ENCODE measurements at regions of chr16 and their contacts with region 1.

Region 1: DNA sequence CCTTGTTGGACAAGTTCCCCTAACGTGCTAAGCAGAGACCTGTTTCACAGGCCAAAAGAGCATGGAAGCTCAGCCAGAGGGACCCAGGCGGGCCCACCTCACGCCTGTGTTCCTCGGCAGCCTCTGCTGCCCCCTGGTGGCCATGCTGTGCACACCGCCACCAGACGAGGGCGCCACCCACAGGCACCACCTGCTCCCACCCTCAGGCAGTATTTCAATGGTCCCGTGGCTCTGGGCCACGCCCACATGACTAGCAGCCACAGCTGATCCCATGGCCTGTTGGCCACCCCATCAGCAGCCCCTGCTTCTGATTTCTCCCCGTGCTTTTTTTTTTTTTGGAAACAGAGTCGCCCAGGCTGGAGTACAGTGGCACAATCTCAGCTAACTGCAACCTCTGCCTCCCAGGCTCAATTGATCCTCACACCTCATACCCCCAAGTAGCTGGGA is 18.9 kb downstream of the MPG start:
- DNase-seq: peak; percentile 82 to 94 (median 90)
- ATAC-seq: peak; percentile 100
- H3K4me3 ChIP-seq: no peak overlapping the region
- H3K4me3 Mint-ChIP-seq: no peak overlapping the region
- H3K27ac ChIP-seq: no peak overlapping the region
- H3K27ac Mint-ChIP-seq: no peak overlapping the region
- H3K4me1 ChIP-seq: no peaks in the 10 kb centered on the region
- H3K4me1 Mint-ChIP-seq: peaks cover 5% of the 10 kb centered on the region
- H3K27me3 ChIP-seq: no peaks in the 10 kb centered on the region
- H3K27me3 Mint-ChIP-seq: no peaks in the 10 kb centered on the region
- CTCF ChIP-seq: peak; percentile 97

Region 2: GRCh38 chr16:77807-78443 is 19.0 kb before region 1 on chr16 and contains the start of gene MPG:
- CTCF ChIA-PET with region 1: interaction called, 309 read pairs
- POLR2A ChIA-PET with region 1: interaction called, 3 read pairs
- intact Hi-C with region 1: no loop called
- DNase-seq: peak; percentile 55 to 90 (median 80)
- ATAC-seq: peak; percentile 91
- H3K4me3 ChIP-seq: peak within 1 kb of the TSS; percentile 68 to 69
- H3K4me3 Mint-ChIP-seq: peak within 1 kb of the TSS; percentile 87
- H3K27ac ChIP-seq: peak within 1 kb of the TSS; percentile 31 to 55
- H3K27ac Mint-ChIP-seq: peak within 1 kb of the TSS; percentile 73
- H3K4me1 ChIP-seq: peaks cover 26% of the 10 kb centered on the region
- H3K4me1 Mint-ChIP-seq: peaks cover 31% of the 10 kb centered on the region
- H3K27me3 ChIP-seq: peaks cover 5 to 7% of the 10 kb centered on the region in 2 experiments
- H3K27me3 Mint-ChIP-seq: peaks cover 11% of the 10 kb centered on the region
- CTCF ChIP-seq: no peak
- total RNA-seq, gene MPG: 12.3 to 13.0 TPM

Region 3: DNA sequence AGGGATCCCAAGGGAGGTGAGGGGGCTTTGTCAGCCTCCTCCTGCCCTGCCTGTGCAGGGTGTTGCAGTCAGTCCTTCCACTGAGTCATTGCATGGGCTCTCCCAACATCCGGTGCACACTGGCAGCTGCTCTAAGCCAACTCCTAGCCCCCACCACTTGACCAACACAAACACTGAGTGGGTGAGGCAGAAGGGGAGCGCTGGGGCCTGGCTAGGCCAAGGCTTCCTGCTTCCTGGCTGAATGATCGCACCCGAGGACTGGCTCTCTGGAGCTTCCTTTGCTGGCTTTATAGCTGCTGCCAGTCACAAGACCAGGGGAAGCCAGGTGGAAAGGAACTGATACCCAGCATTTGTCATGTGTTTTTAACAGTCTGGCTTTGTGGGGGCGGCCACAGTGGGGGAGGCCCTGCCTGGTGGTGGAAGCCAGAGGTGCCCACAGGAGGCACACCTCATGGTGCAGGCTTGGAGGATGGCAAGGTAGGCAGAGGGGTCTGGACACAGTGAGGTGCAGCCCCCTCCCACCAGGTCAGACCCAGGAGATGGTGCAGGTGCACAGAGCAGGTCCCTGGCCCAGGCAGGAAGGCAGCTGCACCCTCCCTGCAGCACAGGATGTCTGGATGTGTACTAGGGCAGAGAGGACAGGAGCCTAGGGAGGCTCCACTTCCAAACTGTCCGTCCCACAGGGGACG is 12.1 kb before region 1 on chr16:
- CTCF ChIA-PET with region 1: interaction called, 30 read pairs
- POLR2A ChIA-PET with region 1: interaction called, 3 read pairs
- intact Hi-C with region 1: no loop called
- DNase-seq: peak in 8 of 9 experiments; percentile 22 to 64 (median 44)
- ATAC-seq: peak; percentile 80
- H3K4me3 ChIP-seq: no peak overlapping the region
- H3K4me3 Mint-ChIP-seq: no peak overlapping the region
- H3K27ac ChIP-seq: peak overlapping the region; percentile 22 to 66
- H3K27ac Mint-ChIP-seq: peak overlapping the region; percentile 85
- H3K4me1 ChIP-seq: peaks cover 24% of the 10 kb centered on the region
- H3K4me1 Mint-ChIP-seq: peaks cover 25% of the 10 kb centered on the region
- H3K27me3 ChIP-seq: no peaks in the 10 kb centered on the region
- H3K27me3 Mint-ChIP-seq: no peaks in the 10 kb centered on the region
- CTCF ChIP-seq: no peak

Region 4: GRCh38 chr16:149024-149662 is 52.2 kb after region 1 on chr16:
- CTCF ChIA-PET with region 1: no interaction called
- POLR2A ChIA-PET with region 1: no interaction called
- intact Hi-C with region 1: no loop called
- DNase-seq: no peak
- ATAC-seq: no peak
- H3K4me3 ChIP-seq: no peak overlapping the region
- H3K4me3 Mint-ChIP-seq: no peak overlapping the region
- H3K27ac ChIP-seq: no peak overlapping the region
- H3K27ac Mint-ChIP-seq: no peak overlapping the region
- H3K4me1 ChIP-seq: no peaks in the 10 kb centered on the region
- H3K4me1 Mint-ChIP-seq: no peaks in the 10 kb centered on the region
- H3K27me3 ChIP-seq: no peaks in the 10 kb centered on the region
- H3K27me3 Mint-ChIP-seq: peaks cover 13% of the 10 kb centered on the region
- CTCF ChIP-seq: no peak

Measured in CD8-positive, alpha-beta T cell (primary cell).